GM18951 (cell line): ENCODE measurements at regions of chr11 and their contacts with region 1.

Region 1: DNA sequence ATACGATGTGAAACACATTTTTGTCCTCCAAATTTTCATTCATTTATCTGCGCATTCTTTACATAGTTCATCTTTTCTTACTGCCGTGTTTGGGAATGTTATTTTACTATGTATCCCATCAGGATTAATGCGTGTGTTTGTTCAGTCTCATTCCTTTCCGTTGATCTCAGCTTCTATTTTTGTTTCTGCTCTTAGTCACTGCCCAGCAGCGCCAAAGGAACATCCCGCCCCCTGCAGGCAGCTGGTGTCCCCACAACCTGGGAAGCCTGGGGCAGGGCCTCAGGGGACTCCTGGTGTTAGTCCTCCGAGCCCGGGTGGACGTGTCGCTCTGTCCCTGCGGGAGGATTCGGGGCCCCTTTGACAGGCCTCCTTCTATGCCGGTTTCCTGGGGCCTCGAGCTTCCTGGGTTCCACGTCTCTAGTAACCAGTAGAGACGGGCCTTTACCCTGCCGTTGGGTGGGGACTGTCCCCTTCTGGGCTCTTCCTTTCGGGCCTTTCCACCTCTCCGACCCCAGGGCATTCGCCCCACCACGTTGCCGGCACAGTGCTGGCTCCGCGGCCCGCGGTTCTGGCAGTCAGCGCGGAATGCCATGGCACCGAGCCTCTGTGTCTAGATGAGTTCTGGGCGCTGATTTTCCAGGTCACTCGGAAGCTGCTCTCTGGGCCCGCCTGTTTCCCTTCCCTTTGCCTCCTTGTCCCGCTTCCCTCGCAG is 39.8 kb downstream of the WEE1 start:
- POLR2A ChIP-seq: no peak

Region 2: GRCh38 chr11:9137293-9138132 is 475.8 kb before region 1 on chr11:
- in situ Hi-C with region 1: no loop called
- POLR2A ChIP-seq: no peak

Region 3: GRCh38 chr11:9753021-9753420 is 139.7 kb after region 1 on chr11:
- in situ Hi-C with region 1: loop called (anchors 5 kb)
- POLR2A ChIP-seq: no peak

Region 4: GRCh38 chr11:9815486-9816136 is 202.3 kb after region 1 on chr11:
- in situ Hi-C with region 1: no loop called
- POLR2A ChIP-seq: no peak

Region 5: GRCh38 chr11:9972989-9973388 is 359.7 kb after region 1 on chr11:
- in situ Hi-C with region 1: loop called (anchors 25 kb)
- POLR2A ChIP-seq: no peak